B cell (primary cell): ENCODE measurements at regions of chr2 and their contacts with region 1.

Region 1: DNA sequence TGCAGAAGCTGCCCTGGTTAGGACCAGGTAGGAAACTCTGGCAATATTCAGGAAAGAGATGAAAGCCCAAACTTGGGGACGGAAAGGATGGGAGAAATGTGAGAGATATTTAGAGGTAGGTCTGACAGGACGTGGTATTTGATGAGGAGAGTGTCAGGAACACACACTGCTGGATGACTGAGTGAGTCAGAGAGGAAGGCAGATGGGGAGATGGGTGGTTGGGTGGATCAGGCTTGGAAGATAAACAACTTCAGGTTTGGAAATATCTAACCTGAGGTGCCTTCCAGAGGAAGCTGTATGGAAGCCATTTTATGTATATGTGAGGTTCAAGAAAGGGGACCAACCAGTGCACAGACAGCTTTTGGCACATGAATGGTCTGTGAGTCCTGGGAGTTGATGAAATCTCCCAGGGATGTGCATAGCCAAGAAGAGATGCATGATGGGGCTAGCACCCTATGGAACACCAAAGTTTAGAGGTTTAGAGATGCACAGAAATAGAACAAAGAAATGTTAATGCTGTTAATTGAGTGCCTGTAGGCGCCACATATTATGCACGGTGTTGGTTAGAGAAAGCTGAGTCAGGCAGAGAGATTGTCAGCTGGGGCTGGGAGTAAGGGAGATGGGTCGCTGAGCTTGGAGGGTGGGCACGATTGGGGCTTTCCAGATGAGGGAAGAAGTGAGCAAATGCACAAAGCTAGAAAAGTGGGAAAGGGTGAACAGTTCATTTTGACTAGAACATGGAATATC is 101.0 kb downstream of the VIT start:
- DNase-seq: no peak
- ATAC-seq: no peak
- H3K4me3 ChIP-seq: no peak overlapping the region
- H3K4me3 Mint-ChIP-seq: no peak overlapping the region
- H3K27ac ChIP-seq: no peak overlapping the region
- H3K27ac Mint-ChIP-seq: no peak overlapping the region
- H3K4me1 ChIP-seq: no peaks in the 10 kb centered on the region
- H3K4me1 Mint-ChIP-seq: no peaks in the 10 kb centered on the region
- H3K27me3 ChIP-seq: peaks cover 0 to 5% (median 1%) of the 10 kb centered on the region in 4 experiments
- H3K27me3 Mint-ChIP-seq: peaks cover 32% of the 10 kb centered on the region
- CTCF ChIP-seq: no peak

Region 2: GRCh38 chr2:36549165-36549574 is 248.3 kb before region 1 on chr2:
- CTCF ChIA-PET with region 1: no interaction called
- POLR2A ChIA-PET with region 1: no interaction called
- intact Hi-C with region 1: no loop called
- DNase-seq: no peak
- ATAC-seq: no peak
- H3K4me3 ChIP-seq: no peak overlapping the region
- H3K4me3 Mint-ChIP-seq: no peak overlapping the region
- H3K27ac ChIP-seq: no peak overlapping the region
- H3K27ac Mint-ChIP-seq: no peak overlapping the region
- H3K4me1 ChIP-seq: no peaks in the 10 kb centered on the region
- H3K4me1 Mint-ChIP-seq: no peaks in the 10 kb centered on the region
- H3K27me3 ChIP-seq: no peaks in the 10 kb centered on the region
- H3K27me3 Mint-ChIP-seq: no peaks in the 10 kb centered on the region
- CTCF ChIP-seq: no peak

Region 3: DNA sequence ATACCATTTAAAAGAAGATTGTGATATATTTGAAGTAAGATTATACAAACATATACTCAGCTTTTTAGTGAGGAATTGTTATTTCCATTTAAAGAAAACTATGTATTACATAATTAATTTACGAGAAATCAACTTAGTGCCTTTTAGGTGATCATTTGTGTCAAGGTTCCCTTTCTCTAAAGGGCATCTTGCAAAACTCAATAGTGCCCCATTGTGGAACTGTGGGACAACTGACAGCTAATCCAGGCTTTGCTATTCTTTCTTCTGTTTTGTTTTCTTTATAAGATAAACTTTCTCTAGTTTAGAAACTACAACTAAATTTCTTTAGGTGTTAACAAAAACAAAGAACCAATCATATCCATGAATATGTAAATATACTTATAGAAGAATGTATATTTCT is 125.3 kb before region 1 on chr2:
- CTCF ChIA-PET with region 1: no interaction called
- POLR2A ChIA-PET with region 1: no interaction called
- intact Hi-C with region 1: no loop called
- DNase-seq: no peak
- ATAC-seq: no peak
- H3K4me3 ChIP-seq: no peak overlapping the region
- H3K4me3 Mint-ChIP-seq: no peak overlapping the region
- H3K27ac ChIP-seq: no peak overlapping the region
- H3K27ac Mint-ChIP-seq: no peak overlapping the region
- H3K4me1 ChIP-seq: no peaks in the 10 kb centered on the region
- H3K4me1 Mint-ChIP-seq: no peaks in the 10 kb centered on the region
- H3K27me3 ChIP-seq: no peaks in the 10 kb centered on the region
- H3K27me3 Mint-ChIP-seq: peaks cover 5% of the 10 kb centered on the region
- CTCF ChIP-seq: no peak

Region 4: DNA sequence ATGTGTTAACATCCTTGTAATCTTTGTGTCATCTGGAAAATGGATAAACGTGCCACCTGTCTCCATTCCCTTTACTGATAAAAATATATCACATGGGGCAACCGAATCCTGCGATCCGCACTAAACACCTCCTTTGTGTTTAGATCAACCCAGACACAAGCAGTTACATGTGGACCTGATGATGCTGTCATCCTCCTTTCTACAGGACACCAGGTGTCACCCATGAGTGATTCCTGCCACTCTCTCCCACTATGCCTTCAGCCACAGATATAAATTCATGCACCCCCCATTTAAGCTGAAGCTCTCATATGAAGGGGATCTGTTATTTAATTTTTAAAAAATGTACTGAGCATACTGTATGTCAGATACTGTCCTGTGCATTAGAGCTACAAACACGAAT is 19.7 kb before region 1 on chr2:
- CTCF ChIA-PET with region 1: interaction called, 17 read pairs
- POLR2A ChIA-PET with region 1: no interaction called
- intact Hi-C with region 1: no loop called
- DNase-seq: no peak
- ATAC-seq: no peak
- H3K4me3 ChIP-seq: no peak overlapping the region
- H3K4me3 Mint-ChIP-seq: no peak overlapping the region
- H3K27ac ChIP-seq: no peak overlapping the region
- H3K27ac Mint-ChIP-seq: no peak overlapping the region
- H3K4me1 ChIP-seq: no peaks in the 10 kb centered on the region
- H3K4me1 Mint-ChIP-seq: no peaks in the 10 kb centered on the region
- H3K27me3 ChIP-seq: peaks cover 0 to 2% (median 1%) of the 10 kb centered on the region in 4 experiments
- H3K27me3 Mint-ChIP-seq: peaks cover 8% of the 10 kb centered on the region
- CTCF ChIP-seq: no peak

Region 5: GRCh38 chr2:37149626-37150322 is 352.3 kb after region 1 on chr2:
- CTCF ChIA-PET with region 1: no interaction called
- POLR2A ChIA-PET with region 1: no interaction called
- intact Hi-C with region 1: no loop called
- DNase-seq: peak; percentile 17
- ATAC-seq: peak; percentile 36
- H3K4me3 ChIP-seq: no peak overlapping the region
- H3K4me3 Mint-ChIP-seq: peak overlapping the region; percentile 20
- H3K27ac ChIP-seq: peak overlapping the region in 1 of 2 donors; percentile 13
- H3K27ac Mint-ChIP-seq: no peak overlapping the region
- H3K4me1 ChIP-seq: peaks cover 5 to 10% of the 10 kb centered on the region in 2 donors
- H3K4me1 Mint-ChIP-seq: peaks cover 29% of the 10 kb centered on the region
- H3K27me3 ChIP-seq: no peaks in the 10 kb centered on the region
- H3K27me3 Mint-ChIP-seq: no peaks in the 10 kb centered on the region
- CTCF ChIP-seq: no peak